B cell (primary cell): ENCODE measurements at regions of chr12 and their contacts with region 1.

Region 1: DNA sequence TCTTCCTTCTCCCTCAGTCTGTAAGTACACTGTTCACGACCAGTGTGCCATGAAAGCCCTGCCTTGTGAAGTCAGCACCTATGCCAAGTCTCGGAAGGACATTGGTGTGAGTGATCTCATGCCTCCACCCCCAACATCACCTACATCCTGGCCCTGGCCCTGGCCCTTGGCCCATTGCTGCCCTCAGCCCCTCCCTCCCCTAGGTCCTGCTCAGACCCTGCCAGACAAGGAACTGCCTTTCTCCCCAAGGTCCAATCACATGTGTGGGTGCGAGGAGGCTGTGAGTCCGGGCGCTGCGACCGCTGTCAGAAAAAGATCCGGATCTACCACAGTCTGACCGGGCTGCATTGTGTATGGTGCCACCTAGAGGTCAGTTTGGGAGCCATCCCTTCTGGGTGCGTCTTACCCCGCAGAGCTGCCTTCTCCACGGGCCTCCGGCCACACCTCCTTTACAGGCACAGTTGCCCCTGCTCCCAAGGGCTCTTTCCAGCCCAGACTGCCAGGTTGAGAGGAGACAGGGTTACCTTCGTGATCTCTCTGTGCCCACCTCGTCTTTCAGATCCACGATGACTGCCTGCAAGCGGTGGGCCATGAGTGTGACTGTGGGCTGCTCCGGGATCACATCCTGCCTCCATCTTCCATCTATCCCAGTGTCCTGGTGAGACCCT is 9.2 kb downstream of the DGKA start:
- DNase-seq: peak; percentile 89
- ATAC-seq: peak; percentile 99
- H3K4me3 ChIP-seq: no peak overlapping the region
- H3K4me3 Mint-ChIP-seq: peak overlapping the region; percentile 13
- H3K27ac ChIP-seq: peak overlapping the region; percentile 35 to 57
- H3K27ac Mint-ChIP-seq: peak overlapping the region; percentile 84
- H3K4me1 ChIP-seq: peaks cover 7 to 12% of the 10 kb centered on the region in 2 donors
- H3K4me1 Mint-ChIP-seq: peaks cover 19% of the 10 kb centered on the region
- H3K27me3 ChIP-seq: no peaks in the 10 kb centered on the region
- H3K27me3 Mint-ChIP-seq: no peaks in the 10 kb centered on the region
- CTCF ChIP-seq: peak; percentile 85

Region 2: DNA sequence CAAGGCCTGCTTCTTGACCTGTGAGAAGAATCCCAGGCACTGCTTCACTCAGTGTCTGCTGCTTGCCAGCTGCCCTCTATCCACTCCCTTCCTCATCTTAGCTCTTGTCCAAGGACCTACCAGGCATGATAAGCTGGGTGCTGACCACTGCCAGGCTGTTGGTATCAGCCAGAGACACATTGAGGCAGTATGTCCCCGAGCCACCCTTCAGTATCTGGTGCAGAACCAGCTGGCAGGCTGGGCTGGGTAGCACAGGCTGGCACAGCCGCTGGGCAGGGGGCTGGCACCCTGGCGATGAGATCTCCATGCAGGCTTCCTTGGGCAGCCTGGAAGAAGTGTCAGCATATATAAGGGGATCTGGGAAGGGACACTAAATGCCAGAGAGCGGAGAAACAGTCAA is 15.1 kb after region 1 on chr12:
- CTCF ChIA-PET with region 1: interaction called, 12 read pairs
- POLR2A ChIA-PET with region 1: no interaction called
- intact Hi-C with region 1: no loop called
- DNase-seq: no peak
- ATAC-seq: no peak
- H3K4me3 ChIP-seq: no peak overlapping the region
- H3K4me3 Mint-ChIP-seq: no peak overlapping the region
- H3K27ac ChIP-seq: no peak overlapping the region
- H3K27ac Mint-ChIP-seq: peak overlapping the region; percentile 46
- H3K4me1 ChIP-seq: no peaks in the 10 kb centered on the region
- H3K4me1 Mint-ChIP-seq: no peaks in the 10 kb centered on the region
- H3K27me3 ChIP-seq: no peaks in the 10 kb centered on the region
- H3K27me3 Mint-ChIP-seq: no peaks in the 10 kb centered on the region
- CTCF ChIP-seq: no peak